H1 (cell line): ENCODE measurements at regions of chr10 and their contacts with region 1.

Region 1: GRCh38 chr10:116809483-116810119 is 39.7 kb upstream of the ENO4 start:
- DNase-seq: peak in 1 of 2 experiments; percentile 81
- H3K4me3 ChIP-seq: no peak overlapping the region
- H3K27ac ChIP-seq: no peak overlapping the region
- H3K4me1 ChIP-seq: peaks cover 0 to 2% (median 0%) of the 10 kb centered on the region in 4 experiments; a peak in 2 of 7 replicates
- H3K27me3 ChIP-seq: no peaks in the 10 kb centered on the region
- CTCF ChIP-seq: peak; percentile 52 to 82 (median 62)
- EP300 ChIP-seq: no peak
- POLR2A ChIP-seq: no peak
- RAD21 ChIP-seq: peak; percentile 34 to 48; a peak in 3 of 4 replicates

Region 2: DNA sequence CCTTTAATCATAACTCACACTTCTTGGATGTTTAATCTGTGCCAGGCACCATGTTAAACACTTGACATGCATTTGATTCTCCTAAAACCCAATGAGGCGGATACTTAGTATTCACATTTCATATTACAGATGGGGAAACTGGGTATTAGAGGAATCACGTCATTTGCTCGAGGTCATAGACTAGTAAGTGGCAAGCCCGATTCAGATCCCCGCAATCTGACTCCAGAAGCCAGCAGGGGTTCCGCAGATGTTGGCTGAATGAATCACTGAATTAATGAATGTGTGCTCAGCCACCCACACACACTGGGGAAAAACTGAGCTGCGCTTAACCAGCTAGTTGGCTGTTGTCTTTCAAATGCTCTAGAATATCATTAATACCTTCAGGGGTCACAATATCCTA is 17.2 kb after region 1 on chr10:
- CTCF ChIA-PET with region 1: interaction called, 23 read pairs
- POLR2A ChIA-PET with region 1: no interaction called
- DNase-seq: no peak
- H3K4me3 ChIP-seq: no peak overlapping the region
- H3K27ac ChIP-seq: no peak overlapping the region
- H3K4me1 ChIP-seq: peaks cover 0 to 8% (median 4%) of the 10 kb centered on the region in 4 experiments; a peak in 4 of 7 replicates
- H3K27me3 ChIP-seq: no peaks in the 10 kb centered on the region
- CTCF ChIP-seq: no peak
- EP300 ChIP-seq: no peak
- POLR2A ChIP-seq: no peak
- RAD21 ChIP-seq: no peak

Region 3: GRCh38 chr10:116875897-116876296 is 66.3 kb after region 1 on chr10:
- CTCF ChIA-PET with region 1: interaction called, 13 read pairs
- POLR2A ChIA-PET with region 1: no interaction called
- DNase-seq: no peak
- H3K4me3 ChIP-seq: no peak overlapping the region
- H3K27ac ChIP-seq: no peak overlapping the region
- H3K4me1 ChIP-seq: peaks cover 0 to 18% (median 8%) of the 10 kb centered on the region in 4 experiments; a peak in 5 of 7 replicates
- H3K27me3 ChIP-seq: no peaks in the 10 kb centered on the region
- CTCF ChIP-seq: no peak
- EP300 ChIP-seq: no peak
- POLR2A ChIP-seq: no peak
- RAD21 ChIP-seq: no peak